ENCODE measurements at regions of chr13 and their contacts with region 1.

Region 1: DNA sequence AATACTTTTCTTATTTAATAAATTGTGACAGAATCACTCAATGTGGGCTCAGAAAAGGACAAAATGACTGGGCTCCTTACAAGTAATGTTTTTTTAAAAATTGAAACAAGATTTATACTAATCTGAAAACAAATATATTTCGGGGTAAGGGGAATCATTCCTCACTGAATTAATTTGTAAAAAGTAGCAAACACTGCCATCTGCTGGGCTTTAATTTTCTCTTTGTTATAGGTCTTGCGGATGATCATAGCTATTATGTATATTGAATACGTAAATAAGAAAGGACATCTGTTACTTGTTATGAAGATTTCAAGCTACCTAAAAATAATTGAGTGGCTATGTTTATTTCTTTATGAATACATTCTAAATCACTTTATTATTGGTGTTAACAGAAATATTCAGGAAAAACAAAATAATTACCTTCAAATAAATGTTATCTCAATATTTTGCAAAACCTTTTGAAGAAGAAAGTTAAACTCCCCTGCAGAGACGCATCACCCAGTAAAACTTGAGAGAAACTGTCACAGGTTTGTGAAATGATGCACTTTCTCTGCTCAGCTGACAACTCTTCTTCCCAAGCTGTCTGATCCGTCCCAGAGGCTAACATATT is 17.8 kb upstream of the ENOX1 start:
- DNase-seq: peak; percentile 69
- H3K4me3 ChIP-seq: peak overlapping the region; percentile 15
- CTCF ChIP-seq: peak; percentile 9

Region 2: GRCh38 chr13:43085545-43085944 is 719.0 kb before region 1 on chr13:
- in situ Hi-C with region 1: loop called (anchors 10 kb)
- DNase-seq: peak; percentile 44
- H3K4me3 ChIP-seq: no peak overlapping the region
- CTCF ChIP-seq: peak; percentile 4

Region 3: DNA sequence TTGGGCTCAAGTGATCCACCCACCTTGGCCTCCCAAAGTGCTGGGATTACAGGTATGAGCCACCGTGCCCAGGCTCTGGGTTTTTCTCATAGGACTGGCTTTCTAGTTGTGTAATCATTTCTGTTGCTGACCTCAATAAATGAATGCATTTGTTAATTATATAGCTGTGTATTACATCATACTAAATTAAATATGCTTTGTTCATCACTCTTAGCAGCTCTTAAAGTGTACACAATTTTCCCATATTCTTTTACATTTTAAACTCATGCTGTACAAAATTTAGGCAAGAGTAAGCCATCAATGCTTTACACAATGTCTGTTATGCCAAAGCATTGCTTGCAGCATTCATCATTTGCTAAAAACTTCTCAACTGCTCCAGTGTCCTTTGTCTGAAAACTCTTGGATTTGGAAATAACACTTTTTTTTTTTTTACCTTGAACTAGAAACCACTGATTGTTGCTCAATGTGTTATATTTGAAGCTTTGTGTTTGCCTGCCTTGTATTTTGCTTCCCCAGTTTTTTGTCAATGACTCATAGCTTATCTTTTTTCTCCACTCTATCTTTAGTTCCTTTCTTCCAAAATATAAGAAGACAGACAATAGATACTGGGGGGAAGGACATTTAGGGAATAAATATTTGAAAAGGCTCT is 43.6 kb after region 1 on chr13:
- in situ Hi-C with region 1: no loop called
- DNase-seq: peak; percentile 37
- H3K4me3 ChIP-seq: no peak overlapping the region
- CTCF ChIP-seq: no peak

Measured in astrocyte of the cerebellum (primary cell).